H1 (cell line): ENCODE measurements at regions of chr7 and their contacts with region 1.

Region 1: GRCh38 chr7:27605689-27606269 is 56.9 kb downstream of the HIBADH start:
- DNase-seq: no peak
- H3K4me3 ChIP-seq: peak overlapping the region in 1 of 4 experiments; percentile 42; a peak in 1 of 8 replicates
- H3K27ac ChIP-seq: no peak overlapping the region
- H3K4me1 ChIP-seq: peaks cover 0 to 21% (median 4%) of the 10 kb centered on the region in 4 experiments; a peak in 5 of 7 replicates
- H3K27me3 ChIP-seq: no peaks in the 10 kb centered on the region
- CTCF ChIP-seq: peak in 2 of 3 experiments; percentile 16 to 17; a peak in 2 of 4 replicates
- EP300 ChIP-seq: no peak
- POLR2A ChIP-seq: no peak
- RAD21 ChIP-seq: peak; percentile 30 to 47; a peak in 3 of 4 replicates

Region 2: DNA sequence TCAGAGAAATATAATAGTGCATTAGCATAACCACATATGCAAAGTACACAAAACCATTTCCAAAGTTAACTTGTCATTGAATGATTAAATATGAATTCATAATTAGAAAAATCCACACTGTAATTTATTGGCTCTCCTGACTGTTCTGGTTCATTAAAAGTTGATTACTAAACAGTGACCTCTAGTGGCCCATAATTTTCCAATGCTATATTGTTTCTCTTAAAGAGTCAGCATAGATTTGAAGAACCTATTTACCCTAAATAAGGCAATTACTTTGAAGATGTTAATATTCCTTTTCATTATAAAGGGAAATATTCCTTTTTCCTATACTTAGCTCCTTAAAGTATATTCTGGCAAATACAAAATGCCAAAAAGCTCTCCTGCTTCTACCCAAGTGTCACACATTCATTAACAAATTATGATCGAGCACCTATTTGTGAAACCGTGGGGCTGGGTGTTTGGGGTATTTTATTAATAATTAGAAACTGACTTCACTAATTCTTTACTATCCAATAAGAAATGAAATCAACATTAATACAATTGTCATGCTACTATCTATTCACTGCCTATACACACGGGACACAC is 29.3 kb before region 1 on chr7:
- CTCF ChIA-PET with region 1: interaction called, 10 read pairs
- POLR2A ChIA-PET with region 1: no interaction called
- DNase-seq: no peak
- H3K4me3 ChIP-seq: no peak overlapping the region
- H3K27ac ChIP-seq: no peak overlapping the region
- H3K4me1 ChIP-seq: peaks cover 0 to 6% (median 1%) of the 10 kb centered on the region in 4 experiments; a peak in 4 of 7 replicates
- H3K27me3 ChIP-seq: no peaks in the 10 kb centered on the region
- CTCF ChIP-seq: peak in 2 of 3 experiments; percentile 16 to 38; a peak in 2 of 4 replicates
- EP300 ChIP-seq: no peak
- POLR2A ChIP-seq: no peak
- RAD21 ChIP-seq: peak in 1 of 2 experiments; percentile 68

Region 3: GRCh38 chr7:27586825-27587224 is 19.0 kb before region 1 on chr7:
- CTCF ChIA-PET with region 1: interaction called, 14 read pairs
- POLR2A ChIA-PET with region 1: interaction called, 3 read pairs
- DNase-seq: no peak
- H3K4me3 ChIP-seq: no peak overlapping the region
- H3K27ac ChIP-seq: no peak overlapping the region
- H3K4me1 ChIP-seq: peaks cover 3 to 7% (median 6%) of the 10 kb centered on the region in 4 experiments
- H3K27me3 ChIP-seq: no peaks in the 10 kb centered on the region
- CTCF ChIP-seq: 0 out of 4 replicates have a peak, but pooled peaks of 1 of the 3 experiments have one; percentile 7
- EP300 ChIP-seq: no peak
- POLR2A ChIP-seq: no peak
- RAD21 ChIP-seq: no peak

Region 4: GRCh38 chr7:27670676-27671075 is 64.9 kb after region 1 on chr7:
- CTCF ChIA-PET with region 1: no interaction called
- POLR2A ChIA-PET with region 1: no interaction called
- DNase-seq: no peak
- H3K4me3 ChIP-seq: no peak overlapping the region
- H3K27ac ChIP-seq: no peak overlapping the region
- H3K4me1 ChIP-seq: no peaks in the 10 kb centered on the region
- H3K27me3 ChIP-seq: no peaks in the 10 kb centered on the region
- CTCF ChIP-seq: no peak
- EP300 ChIP-seq: no peak
- POLR2A ChIP-seq: no peak
- RAD21 ChIP-seq: no peak